GM10248 (cell line): ENCODE measurements at regions of chr1 and their contacts with region 1.

Region 1: DNA sequence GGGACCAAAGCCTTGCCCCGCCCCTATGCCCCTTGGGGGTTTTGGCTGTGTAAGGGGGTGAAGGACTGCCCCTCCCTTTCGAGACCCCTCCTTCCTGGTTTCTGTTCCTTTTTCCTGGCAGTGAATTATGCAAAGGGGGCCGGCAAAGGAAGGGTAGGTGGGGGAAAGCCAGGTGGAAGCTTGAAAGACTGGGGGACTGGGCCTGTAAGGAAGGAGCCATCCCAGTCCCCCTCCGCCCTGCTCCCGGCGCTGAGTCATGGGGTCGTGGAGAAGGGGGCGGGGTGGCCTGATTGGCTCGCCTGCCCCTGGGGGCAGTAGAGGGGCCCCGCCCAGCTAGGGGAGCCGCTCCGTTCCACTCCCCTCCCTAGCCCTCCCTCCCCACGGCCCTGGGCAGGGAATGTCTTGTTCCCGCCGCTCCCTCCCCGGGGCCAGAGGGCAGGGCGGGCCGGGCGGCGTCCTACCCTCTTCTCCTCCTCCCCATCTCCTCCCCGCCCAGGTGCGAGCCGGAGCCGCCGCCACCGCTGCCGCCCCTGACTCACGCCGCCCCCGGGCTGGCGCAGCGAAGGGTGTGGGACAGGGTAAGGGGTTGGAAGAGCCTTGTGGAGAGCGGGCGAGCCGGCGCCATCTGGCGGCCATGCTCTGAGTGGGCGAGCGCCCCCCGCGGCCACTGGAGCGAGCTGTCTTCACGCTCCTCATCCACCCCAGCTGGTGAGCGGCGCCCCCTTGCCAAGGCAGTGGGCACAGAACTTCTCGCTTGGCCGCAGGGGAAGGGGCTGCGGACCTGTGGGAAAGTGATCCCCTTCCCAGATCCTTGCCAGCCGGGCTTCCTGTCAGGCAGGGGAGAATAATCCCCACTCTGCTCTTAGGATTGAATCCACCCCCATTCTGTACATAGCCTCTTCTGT is 14.7 kb downstream of the ZBTB7B start:
- DNase-seq: peak; percentile 88
- CTCF ChIP-seq: peak; percentile 100

Region 2: DNA sequence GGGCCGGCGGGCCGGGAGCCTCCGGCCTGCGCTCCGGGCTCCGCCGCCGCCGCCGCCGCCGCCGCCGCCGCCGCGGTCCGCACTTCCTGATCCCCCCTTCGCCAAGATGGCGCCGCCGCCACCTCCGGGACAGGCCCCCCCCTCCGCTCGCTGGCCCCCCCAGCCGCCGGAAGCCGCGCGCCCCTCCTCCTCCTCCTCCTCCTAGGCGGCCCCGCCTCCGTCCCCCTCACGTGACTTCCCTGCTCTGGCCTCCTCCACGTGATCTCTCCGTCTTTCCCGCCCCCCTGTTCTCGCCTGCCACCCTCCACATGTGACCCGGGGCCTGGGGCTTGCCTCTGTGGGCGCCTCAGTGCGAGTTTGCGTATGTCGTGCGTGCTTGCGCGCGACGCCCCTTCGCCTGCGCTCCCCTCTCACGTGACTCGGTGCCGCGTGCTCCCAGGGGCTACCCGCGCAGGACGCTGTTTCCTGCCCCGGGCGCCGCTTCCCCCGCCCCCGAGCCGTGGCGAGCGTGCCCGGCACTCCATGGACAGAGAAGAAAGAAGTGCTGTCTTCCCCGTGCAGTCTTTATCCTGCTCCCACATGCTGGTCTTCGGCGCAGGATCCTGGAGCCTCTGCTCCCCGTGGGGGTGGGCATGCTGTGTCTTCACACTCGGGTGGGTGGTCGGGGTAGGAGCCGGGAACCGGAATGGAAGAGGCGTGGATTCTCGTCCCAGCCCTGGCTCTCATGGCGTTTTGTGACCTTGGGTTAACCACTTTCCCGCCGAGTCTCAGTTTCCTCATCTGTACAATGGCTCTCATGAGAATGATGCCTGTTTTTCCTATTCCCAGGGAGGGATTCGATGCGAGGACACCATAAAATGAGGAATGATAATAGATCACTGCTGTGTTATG is 458.5 kb before region 1 on chr1 and contains the start of gene UBE2Q1:
- CTCF ChIA-PET with region 1: interaction called, 11 read pairs
- POLR2A ChIA-PET with region 1: no interaction called
- DNase-seq: peak; percentile 98
- CTCF ChIP-seq: no peak

Region 3: GRCh38 chr1:154961497-154962262 is 55.6 kb before region 1 on chr1 and contains the start of gene PYGO2:
- CTCF ChIA-PET with region 1: interaction called, 24 read pairs
- POLR2A ChIA-PET with region 1: no interaction called
- DNase-seq: peak; percentile 88
- CTCF ChIP-seq: peak; percentile 76

Region 4: GRCh38 chr1:155001675-155002463 is 15.4 kb before region 1 on chr1:
- CTCF ChIA-PET with region 1: interaction called, 175 read pairs
- POLR2A ChIA-PET with region 1: no interaction called
- DNase-seq: peak; percentile 99
- CTCF ChIP-seq: peak; percentile 45

Region 5: DNA sequence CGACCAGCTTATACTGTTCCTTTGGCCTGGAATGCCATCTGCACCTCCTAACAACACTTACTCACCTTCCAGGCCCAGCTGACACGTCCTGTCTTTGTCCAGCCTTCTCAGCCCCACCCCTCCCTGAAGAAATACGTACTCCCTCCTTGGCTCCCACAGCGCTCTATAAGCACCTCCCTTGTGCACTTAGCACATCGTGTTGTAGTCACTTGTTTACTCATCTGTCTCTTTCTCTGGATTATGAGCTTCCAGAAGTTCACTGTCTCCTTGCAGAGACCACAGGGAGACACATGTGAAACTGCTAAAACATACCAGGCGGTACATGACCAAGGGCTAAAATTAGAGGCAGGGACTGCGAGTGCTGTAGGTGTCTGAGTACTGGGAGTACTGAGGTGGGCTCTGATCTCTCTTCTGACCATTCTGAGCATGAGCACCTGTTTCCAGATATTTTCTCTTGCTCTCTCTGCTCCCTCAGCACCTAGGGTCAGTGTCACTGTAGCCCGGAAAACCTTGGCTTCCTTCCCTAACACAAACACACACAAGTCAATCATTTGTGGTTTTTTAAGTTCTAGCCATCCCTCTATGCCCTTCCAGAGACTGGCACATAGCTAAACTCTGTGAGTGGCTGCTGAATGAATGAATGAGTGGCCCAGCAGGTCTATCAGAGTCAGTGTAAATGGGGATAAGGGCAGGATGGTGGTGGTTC is 21.5 kb after region 1 on chr1:
- CTCF ChIA-PET with region 1: interaction called, 67 read pairs
- POLR2A ChIA-PET with region 1: interaction called, 7 read pairs
- DNase-seq: no peak
- CTCF ChIP-seq: no peak

Region 6: DNA sequence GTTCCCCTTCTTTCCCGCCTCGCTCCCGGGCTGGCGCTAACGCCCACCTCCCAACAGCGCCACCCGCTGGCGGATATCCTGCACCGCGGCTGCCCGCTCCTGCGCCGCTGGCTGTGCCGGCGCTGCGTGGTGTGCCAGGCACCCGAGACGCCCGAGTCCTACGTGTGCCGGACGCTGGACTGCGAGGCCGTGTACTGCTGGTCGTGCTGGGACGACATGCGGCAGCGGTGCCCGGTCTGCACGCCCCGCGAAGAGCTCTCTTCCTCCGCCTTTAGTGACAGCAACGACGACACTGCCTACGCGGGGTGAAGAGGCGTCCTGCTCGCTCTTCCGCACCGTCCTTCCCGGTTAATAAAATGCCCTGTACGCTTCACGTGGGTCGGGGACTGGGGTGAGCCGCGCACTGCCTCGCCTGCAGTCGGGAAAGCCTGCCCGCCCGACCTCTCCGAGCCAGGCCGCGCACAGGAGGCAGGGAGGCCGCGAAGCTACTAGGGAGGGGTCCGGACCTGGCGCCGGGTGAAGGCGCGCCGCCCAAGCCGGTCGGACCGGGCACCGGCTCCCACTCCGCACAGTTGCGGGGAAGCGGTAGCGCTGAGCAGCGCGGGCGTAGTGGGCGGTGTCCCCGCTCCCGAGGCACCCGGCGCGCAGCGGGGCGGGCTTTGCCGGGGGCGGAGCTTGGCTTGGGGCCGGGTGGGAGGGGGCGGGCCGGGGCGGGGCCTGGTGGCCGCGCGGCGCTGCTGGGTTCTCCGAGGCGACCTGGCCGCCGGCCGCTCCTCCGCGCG is 33.5 kb after region 1 on chr1 and contains the start of gene ADAM15:
- CTCF ChIA-PET with region 1: interaction called, 67 read pairs
- POLR2A ChIA-PET with region 1: no interaction called
- DNase-seq: peak; percentile 99
- CTCF ChIP-seq: peak; percentile 94

Region 7: GRCh38 chr1:155078469-155079209 is 61.3 kb after region 1 on chr1 and contains the start of gene EFNA3:
- CTCF ChIA-PET with region 1: interaction called, 10 read pairs
- POLR2A ChIA-PET with region 1: no interaction called
- DNase-seq: peak; percentile 90
- CTCF ChIP-seq: no peak